ENCODE measurements at regions of chr11 and their contacts with region 1.

Region 1: DNA sequence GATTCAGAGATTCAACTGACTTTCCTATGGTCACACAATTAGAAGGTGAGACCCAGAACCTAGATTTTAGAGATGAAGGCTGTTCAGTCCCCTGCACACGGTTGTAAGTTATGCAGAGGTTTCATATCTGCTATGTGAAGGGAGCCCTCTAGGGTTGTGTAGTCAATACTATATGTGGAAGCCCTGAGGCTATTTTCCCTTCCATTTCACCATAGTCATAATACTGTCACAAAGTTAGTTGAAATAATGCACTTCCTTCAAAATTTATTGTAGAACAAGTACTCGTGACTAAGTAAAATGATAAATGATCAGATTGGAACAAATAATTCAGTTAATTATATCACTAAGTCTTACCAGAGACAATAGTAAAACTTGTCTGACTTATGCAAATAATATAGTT is 48.8 kb downstream of the ENDOD1 start:
- DNase-seq: peak; percentile 55
- CTCF ChIP-seq: peak; percentile 48

Region 2: DNA sequence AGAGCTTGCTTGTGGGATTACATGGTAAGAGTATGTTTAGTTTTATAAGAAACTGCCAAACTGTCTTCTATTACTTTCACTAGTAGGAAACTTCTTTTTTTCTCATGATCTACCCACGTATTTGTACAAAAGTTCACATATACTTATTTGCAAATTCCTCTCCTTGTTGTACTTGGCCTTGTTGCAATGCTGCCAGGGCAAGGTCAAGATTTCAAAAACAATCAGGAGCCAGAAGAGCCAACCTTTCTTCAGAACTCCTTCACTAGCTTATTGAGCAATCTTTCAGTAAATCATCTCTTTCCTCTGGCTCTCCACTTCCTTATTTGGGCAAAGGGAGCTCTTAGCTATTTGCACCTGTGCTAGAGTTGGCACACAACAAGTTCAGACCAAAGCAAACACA is 62.0 kb before region 1 on chr11:
- in situ Hi-C with region 1: loop called (anchors 10 kb)
- DNase-seq: no peak
- CTCF ChIP-seq: no peak

Region 3: DNA sequence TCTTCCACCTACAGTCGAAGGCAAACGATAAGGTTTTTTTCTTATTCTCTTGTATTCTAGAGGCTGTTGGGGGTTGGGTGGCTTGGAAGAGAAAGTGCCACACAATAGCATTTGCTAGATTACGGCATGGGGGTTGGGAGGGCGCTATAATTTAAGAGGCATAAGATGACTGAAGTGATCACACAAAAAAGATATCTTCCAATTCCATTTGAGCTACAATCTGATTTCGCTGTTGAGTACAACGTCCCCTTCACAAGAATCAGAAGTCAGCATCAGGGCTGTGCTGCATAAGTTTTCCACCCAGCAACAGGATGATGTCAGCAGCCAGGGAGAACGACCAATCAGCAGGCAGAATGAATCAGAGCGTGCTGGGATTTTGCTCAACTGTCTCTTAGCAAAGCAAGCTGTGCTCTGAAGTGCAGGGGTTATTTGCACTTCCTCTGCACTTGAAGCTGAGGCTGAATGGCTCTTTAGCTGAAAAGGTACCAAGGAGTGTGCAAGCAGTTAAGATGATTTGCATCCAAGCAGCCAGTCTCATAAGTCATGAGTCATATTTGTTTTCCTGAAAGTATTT is 115.8 kb after region 1 on chr11:
- in situ Hi-C with region 1: no loop called
- DNase-seq: peak; percentile 67
- CTCF ChIP-seq: no peak